GM10248 (cell line): ENCODE measurements at regions of chr2 and their contacts with region 1.

Region 1: DNA sequence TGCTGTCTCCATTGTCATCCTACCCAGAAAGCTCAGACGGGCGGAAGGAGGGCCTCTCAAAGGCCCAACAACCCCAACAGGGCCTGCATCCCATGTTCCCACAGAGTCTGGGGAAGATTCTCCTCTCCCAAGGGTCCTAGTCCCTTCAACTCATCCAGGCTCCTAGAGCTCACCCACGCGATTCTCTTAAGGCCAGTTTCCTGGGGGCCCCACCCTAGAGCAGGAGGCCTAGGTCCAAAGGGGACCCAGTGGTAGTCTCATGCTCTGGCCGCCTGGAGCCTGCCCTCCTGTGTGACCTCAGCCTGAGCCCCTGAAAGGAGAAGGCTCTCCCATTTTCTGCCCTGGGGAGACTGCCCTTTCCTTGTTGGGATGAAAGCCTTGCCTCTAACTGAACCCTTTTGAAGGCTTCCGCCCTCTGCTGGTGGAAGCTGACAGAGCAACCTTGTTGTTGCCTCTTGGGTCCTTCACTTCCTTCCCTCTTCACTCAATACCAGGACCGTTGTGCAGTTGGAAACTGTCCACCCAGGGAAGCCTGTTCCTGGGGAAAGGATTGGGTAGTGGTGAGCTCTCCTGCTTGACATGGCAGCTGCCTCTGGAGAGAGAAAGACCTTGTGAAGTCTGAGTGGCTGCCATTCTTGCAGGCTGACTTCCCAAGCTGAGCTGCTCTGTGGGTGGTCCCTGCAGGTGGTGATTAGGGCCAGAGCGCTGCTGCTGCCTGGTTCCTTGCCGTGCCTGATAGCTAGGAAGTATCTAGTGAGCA is 86.0 kb upstream of the ALPP start:
- DNase-seq: peak; percentile 70
- CTCF ChIP-seq: peak; percentile 77

Region 2: GRCh38 chr2:231765496-231765929 is 527.1 kb before region 1 on chr2:
- CTCF ChIA-PET with region 1: no interaction called
- POLR2A ChIA-PET with region 1: no interaction called
- DNase-seq: peak; percentile 19
- CTCF ChIP-seq: no peak

Region 3: GRCh38 chr2:231900486-231900942 is 392.1 kb before region 1 on chr2:
- CTCF ChIA-PET with region 1: interaction called, 12 read pairs
- POLR2A ChIA-PET with region 1: no interaction called
- DNase-seq: peak; percentile 82
- CTCF ChIP-seq: peak; percentile 93

Region 4: DNA sequence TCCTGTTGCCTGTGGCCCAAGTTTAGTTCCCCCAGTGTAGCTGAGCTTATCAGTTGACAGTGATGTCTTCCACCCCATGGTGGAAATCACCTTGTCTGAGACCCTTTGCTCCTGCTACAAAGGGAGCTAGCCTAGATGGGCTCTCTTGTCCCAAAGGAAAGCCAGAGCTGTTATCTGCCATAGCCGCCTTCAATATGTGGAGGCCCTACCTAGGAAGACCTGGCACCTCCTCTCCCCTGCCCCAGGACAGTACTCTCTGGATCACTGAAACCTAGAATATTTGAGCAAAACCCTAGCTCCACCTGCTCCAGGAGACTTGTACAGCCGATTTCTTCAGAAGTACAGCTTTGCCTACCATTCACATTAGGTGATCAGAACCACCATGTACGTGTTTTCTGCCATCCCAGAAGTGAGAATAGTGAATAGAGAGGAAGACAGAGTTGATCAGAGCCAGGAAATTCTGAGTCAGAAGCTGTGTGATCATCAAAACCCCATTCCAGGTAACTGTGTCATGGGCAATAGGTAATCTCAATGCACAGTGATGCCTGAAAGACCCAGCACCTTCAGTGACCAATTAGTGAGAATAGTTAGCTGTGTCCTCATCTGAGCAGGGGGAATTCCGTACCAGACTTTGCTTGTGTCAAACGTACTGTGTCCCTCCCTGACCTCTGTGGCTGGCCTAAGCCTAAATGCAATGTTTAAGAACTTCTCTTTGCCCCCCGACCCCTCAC is 52.5 kb before region 1 on chr2:
- CTCF ChIA-PET with region 1: interaction called, 18 read pairs
- POLR2A ChIA-PET with region 1: no interaction called
- DNase-seq: no peak
- CTCF ChIP-seq: no peak

Region 5: DNA sequence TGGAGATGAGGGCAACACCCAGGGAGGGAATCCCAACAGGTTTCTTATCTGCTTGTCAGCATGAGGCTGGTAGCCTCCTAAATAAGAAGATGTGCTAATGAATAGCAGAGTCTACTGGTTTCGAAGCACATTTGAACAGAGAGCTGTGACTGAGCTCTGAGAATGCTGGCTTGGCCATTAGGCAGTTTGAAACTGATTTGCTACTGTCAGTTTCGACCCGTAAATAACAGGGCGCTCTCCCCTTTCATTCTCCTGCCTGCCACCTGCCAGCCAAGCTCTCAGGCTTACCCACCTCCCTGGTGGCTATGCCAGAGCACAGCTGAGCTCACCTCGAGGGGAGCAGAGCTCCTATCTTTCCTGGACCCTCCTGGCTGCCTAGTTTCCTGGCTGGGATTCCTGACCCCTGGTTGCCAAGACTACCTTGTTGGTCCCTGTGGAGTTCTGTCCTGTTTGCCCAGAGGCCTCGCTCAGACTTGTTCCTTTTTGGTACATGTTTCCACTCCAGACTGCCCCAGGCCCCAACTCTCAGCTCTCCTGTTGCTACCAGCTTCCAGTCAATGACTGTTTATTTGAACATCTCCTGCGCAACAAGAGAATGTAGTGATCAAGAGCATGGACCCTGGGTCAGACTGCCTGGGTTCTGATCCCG is 16.4 kb before region 1 on chr2:
- CTCF ChIA-PET with region 1: interaction called, 14 read pairs
- POLR2A ChIA-PET with region 1: no interaction called
- DNase-seq: no peak
- CTCF ChIP-seq: no peak

Region 6: GRCh38 chr2:232327105-232328041 is 34.8 kb after region 1 on chr2:
- CTCF ChIA-PET with region 1: interaction called, 20 read pairs
- POLR2A ChIA-PET with region 1: no interaction called
- DNase-seq: peak; percentile 81
- CTCF ChIP-seq: peak; percentile 88

Region 7: DNA sequence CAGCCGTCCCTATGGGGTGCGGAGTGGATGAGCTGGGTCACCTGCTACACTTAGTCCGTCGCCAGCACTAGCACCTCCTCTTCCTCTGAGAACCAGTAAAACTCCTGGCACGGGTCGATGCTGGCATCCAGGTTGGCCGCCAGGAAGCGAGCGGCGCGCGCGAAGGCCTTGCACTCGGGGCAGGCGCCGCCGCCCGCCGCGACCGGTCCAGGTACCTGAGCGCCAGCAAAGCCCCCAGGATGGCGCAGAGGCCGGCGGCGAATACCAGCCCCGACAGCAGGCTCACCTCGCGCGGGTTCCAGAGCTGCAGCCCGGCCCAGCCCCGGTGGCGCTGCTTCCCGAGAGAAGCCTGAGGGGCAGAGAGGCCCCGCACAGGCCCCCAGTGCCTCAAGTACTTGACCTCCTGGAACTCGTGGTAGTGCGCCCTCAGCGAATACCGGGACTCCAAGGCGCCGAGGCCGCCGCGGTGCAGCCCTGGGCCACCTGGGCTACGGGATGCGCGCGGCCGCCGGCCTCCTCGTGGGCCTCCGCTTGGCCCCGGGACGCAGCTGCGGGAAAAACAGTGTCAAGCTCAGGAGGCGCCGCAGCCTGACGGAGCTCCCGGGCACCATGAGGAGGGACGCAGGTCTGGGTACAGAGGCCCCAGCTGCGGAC is 58.4 kb after region 1 on chr2:
- CTCF ChIA-PET with region 1: no interaction called
- POLR2A ChIA-PET with region 1: no interaction called
- DNase-seq: no peak
- CTCF ChIP-seq: no peak